Naive thymus-derived CD4-positive, alpha-beta T cell (primary cell): ENCODE measurements at regions of chr1 and their contacts with region 1.

Region 1: GRCh38 chr1:212302745-212303383 is 17.7 kb downstream of the PPP2R5A start:
- DNase-seq: no peak
- ATAC-seq: no peak
- H3K4me3 ChIP-seq: no peak overlapping the region
- H3K4me3 Mint-ChIP-seq: peak overlapping the region in 4 of 10 donors; percentile 0 to 56 (median 25)
- H3K27ac ChIP-seq: no peak overlapping the region
- H3K27ac Mint-ChIP-seq: no peak overlapping the region
- H3K4me1 ChIP-seq: peaks cover 5 to 13% of the 10 kb centered on the region in 2 donors
- H3K4me1 Mint-ChIP-seq: peaks cover 25 to 71% (median 65%) of the 10 kb centered on the region in 7 donors
- H3K27me3 ChIP-seq: no peaks in the 10 kb centered on the region
- H3K27me3 Mint-ChIP-seq: no peaks in the 10 kb centered on the region

Region 2: GRCh38 chr1:212315907-212316306 is 13.0 kb after region 1 on chr1:
- CTCF ChIA-PET with region 1: no interaction called
- POLR2A ChIA-PET with region 1: no interaction called
- intact Hi-C with region 1: loop called in 1 of 2 experiments (anchors 1 kb)
- DNase-seq: no peak
- ATAC-seq: no peak
- H3K4me3 ChIP-seq: no peak overlapping the region
- H3K4me3 Mint-ChIP-seq: peak overlapping the region in 6 of 10 donors; percentile 6 to 57 (median 37)
- H3K27ac ChIP-seq: no peak overlapping the region
- H3K27ac Mint-ChIP-seq: peak overlapping the region in 7 of 9 donors; percentile 19 to 79 (median 39)
- H3K4me1 ChIP-seq: peaks cover 0 to 6% of the 10 kb centered on the region in 2 donors
- H3K4me1 Mint-ChIP-seq: peaks cover 19 to 59% (median 47%) of the 10 kb centered on the region in 7 donors
- H3K27me3 ChIP-seq: no peaks in the 10 kb centered on the region
- H3K27me3 Mint-ChIP-seq: no peaks in the 10 kb centered on the region